Panc1 (cell line): ENCODE measurements at regions of chr17 and their contacts with region 1.

Region 1: DNA sequence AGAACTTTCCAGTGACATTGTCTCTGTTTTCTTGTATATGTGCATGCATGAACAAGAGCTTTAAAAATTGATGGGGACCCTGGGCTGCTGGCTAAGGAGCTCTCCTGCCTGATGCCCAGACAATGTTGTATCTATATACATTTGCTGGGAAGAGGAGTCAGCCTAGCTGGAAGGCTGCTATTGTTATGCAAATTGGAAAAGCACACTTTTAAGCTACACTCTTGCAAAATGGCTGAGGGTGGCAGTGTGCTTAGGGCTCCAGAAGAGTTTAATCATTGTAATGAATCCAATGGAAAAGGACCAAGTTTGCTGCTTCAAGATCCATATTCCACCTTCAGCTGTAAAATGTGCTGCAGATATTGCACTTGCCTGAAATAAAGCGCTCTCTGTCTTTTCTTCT is 171.8 kb downstream of the PRKCA start:
- DNase-seq: no peak
- ATAC-seq: no peak
- H3K4me3 ChIP-seq: no peak overlapping the region
- H3K27ac ChIP-seq: no peak overlapping the region
- H3K4me1 ChIP-seq: peaks cover 21% of the 10 kb centered on the region
- H3K27me3 ChIP-seq: no peaks in the 10 kb centered on the region
- CTCF ChIP-seq: no peak

Region 2: GRCh38 chr17:66331038-66331816 is 143.0 kb before region 1 on chr17:
- CTCF ChIA-PET with region 1: no interaction called
- POLR2A ChIA-PET with region 1: no interaction called
- in situ Hi-C with region 1: no loop called
- intact Hi-C with region 1: no loop called
- DNase-seq: no peak
- ATAC-seq: 0 out of 2 replicates have a peak, but pooled peaks have one; percentile 17
- H3K4me3 ChIP-seq: no peak overlapping the region
- H3K27ac ChIP-seq: 0 out of 2 replicates have a peak overlapping the region, but pooled peaks have one; percentile 23
- H3K4me1 ChIP-seq: peaks cover 4% of the 10 kb centered on the region
- H3K27me3 ChIP-seq: no peaks in the 10 kb centered on the region
- CTCF ChIP-seq: no peak

Region 3: GRCh38 chr17:66459811-66460270 is 14.4 kb before region 1 on chr17:
- CTCF ChIA-PET with region 1: no interaction called
- POLR2A ChIA-PET with region 1: no interaction called
- in situ Hi-C with region 1: no loop called
- intact Hi-C with region 1: no loop called
- DNase-seq: peak; percentile 85
- ATAC-seq: peak; percentile 91
- H3K4me3 ChIP-seq: no peak overlapping the region; a peak in 1 of 4 replicates
- H3K27ac ChIP-seq: peak overlapping the region; percentile 81
- H3K4me1 ChIP-seq: peaks cover 36% of the 10 kb centered on the region
- H3K27me3 ChIP-seq: no peaks in the 10 kb centered on the region
- CTCF ChIP-seq: no peak

Region 4: GRCh38 chr17:66679631-66680517 is 205.6 kb after region 1 on chr17:
- CTCF ChIA-PET with region 1: no interaction called
- POLR2A ChIA-PET with region 1: interaction called, 11 read pairs
- in situ Hi-C with region 1: no loop called
- intact Hi-C with region 1: no loop called
- DNase-seq: no peak
- ATAC-seq: no peak
- H3K4me3 ChIP-seq: no peak overlapping the region
- H3K27ac ChIP-seq: no peak overlapping the region
- H3K4me1 ChIP-seq: peaks cover 14% of the 10 kb centered on the region
- H3K27me3 ChIP-seq: no peaks in the 10 kb centered on the region
- CTCF ChIP-seq: no peak